ENCODE measurements at regions of chr2 and their contacts with region 1.

Region 1: DNA sequence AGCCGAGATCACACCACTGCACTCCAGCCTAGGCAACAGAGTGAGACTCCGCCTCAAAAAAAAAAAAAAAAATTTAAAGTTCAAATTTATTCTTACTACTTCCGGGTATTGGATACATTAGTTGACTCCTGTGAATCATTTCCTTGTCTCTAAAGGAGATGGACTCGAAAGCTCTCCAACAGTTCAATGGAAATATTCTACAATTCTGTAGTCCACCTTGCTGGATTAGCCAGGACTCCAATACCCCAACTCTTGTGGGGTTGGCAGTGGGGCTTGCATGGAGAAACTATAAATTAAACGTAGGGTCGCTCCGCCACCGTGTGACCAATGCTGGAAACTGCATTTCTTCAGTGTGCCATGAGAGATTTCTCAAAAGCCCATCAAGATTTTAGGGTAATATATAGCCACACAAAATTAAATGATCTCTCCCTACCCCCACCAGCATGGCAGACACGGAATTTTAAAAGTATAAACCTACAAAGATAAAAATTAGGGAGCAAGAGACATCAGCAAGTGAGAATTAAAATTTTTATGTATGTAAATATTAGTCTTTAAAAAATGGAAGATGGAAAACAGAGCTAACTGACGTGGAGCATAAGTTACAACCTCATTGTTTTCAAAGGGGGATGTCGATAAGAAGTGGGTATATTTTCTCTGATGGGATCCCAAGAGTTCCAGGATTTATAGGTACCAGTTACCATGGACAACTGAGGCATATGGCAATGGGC is 27.8 kb upstream of the GAREM2 start:
- DNase-seq: peak; percentile 70 to 77
- H3K4me3 ChIP-seq: no peak overlapping the region
- H3K4me3 Mint-ChIP-seq: no peak overlapping the region
- H3K27ac Mint-ChIP-seq: no peak overlapping the region
- H3K4me1 ChIP-seq: 0 out of 2 replicates have a peak, but pooled peaks cover 11% of the 10 kb centered on the region
- H3K4me1 Mint-ChIP-seq: peaks cover 18% of the 10 kb centered on the region
- H3K27me3 ChIP-seq: no peaks in the 10 kb centered on the region
- H3K27me3 Mint-ChIP-seq: peaks cover 3% of the 10 kb centered on the region
- CTCF ChIP-seq: peak; percentile 73 to 87

Region 2: GRCh38 chr2:25851740-25852503 is 293.2 kb before region 1 on chr2:
- CTCF ChIA-PET with region 1: no interaction called
- POLR2A ChIA-PET with region 1: no interaction called
- intact Hi-C with region 1: loop called (anchors 1 kb)
- DNase-seq: peak in 1 of 2 experiments; percentile 56
- H3K4me3 ChIP-seq: no peak overlapping the region
- H3K4me3 Mint-ChIP-seq: no peak overlapping the region
- H3K27ac Mint-ChIP-seq: no peak overlapping the region
- H3K4me1 ChIP-seq: no peaks in the 10 kb centered on the region; the same call in 1 of the 2 replicates
- H3K4me1 Mint-ChIP-seq: peaks cover 7% of the 10 kb centered on the region
- H3K27me3 ChIP-seq: no peaks in the 10 kb centered on the region
- H3K27me3 Mint-ChIP-seq: no peaks in the 10 kb centered on the region
- CTCF ChIP-seq: peak; percentile 69 to 70

Region 3: GRCh38 chr2:26088032-26088643 is 57.0 kb before region 1 on chr2:
- CTCF ChIA-PET with region 1: interaction called, 4 read pairs
- POLR2A ChIA-PET with region 1: no interaction called
- intact Hi-C with region 1: loop called (anchors 1 kb)
- DNase-seq: peak in 1 of 2 experiments; percentile 34
- H3K4me3 ChIP-seq: no peak overlapping the region
- H3K4me3 Mint-ChIP-seq: no peak overlapping the region
- H3K27ac Mint-ChIP-seq: no peak overlapping the region
- H3K4me1 ChIP-seq: no peaks in the 10 kb centered on the region
- H3K4me1 Mint-ChIP-seq: peaks cover 14% of the 10 kb centered on the region
- H3K27me3 ChIP-seq: no peaks in the 10 kb centered on the region
- H3K27me3 Mint-ChIP-seq: no peaks in the 10 kb centered on the region
- CTCF ChIP-seq: peak; percentile 76 to 78

Measured in Caco-2 (cell line).